OCI-LY7 (cell line): ENCODE measurements at regions of chr7 and their contacts with region 1.

Region 1: GRCh38 chr7:32347244-32347828 is 142.8 kb downstream of the LSM5 start:
- DNase-seq: peak; percentile 19
- H3K4me3 ChIP-seq: no peak overlapping the region
- H3K27ac ChIP-seq: no peak overlapping the region
- H3K4me1 ChIP-seq: no peaks in the 10 kb centered on the region
- CTCF ChIP-seq: peak; percentile 90

Region 2: GRCh38 chr7:31875424-31875823 is 471.9 kb before region 1 on chr7:
- CTCF ChIA-PET with region 1: no interaction called
- POLR2A ChIA-PET with region 1: no interaction called
- intact Hi-C with region 1: no loop called
- DNase-seq: no peak
- H3K4me3 ChIP-seq: no peak overlapping the region
- H3K27ac ChIP-seq: no peak overlapping the region
- H3K4me1 ChIP-seq: no peaks in the 10 kb centered on the region
- CTCF ChIP-seq: no peak

Region 3: DNA sequence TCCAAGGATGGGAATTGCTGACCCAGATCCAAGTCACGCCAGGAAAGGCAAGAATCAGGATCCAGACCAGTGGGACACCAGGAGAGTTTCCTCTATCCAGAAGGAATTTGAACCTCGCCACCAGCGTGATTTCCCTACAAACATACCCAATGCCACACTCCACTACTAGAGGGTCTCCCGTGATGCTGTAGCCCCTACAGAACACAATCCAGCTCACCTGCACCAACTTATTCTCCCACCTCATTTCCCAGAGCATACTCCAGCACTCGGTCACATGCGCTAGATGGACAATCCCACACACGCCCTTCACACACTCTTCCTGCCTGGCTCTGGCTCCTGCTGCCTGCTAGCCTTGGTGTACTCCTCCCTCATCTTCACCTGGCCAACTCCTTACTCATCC is 135.0 kb before region 1 on chr7:
- CTCF ChIA-PET with region 1: no interaction called
- POLR2A ChIA-PET with region 1: no interaction called
- intact Hi-C with region 1: loop called (anchors 5 kb)
- DNase-seq: no peak
- H3K4me3 ChIP-seq: no peak overlapping the region
- H3K27ac ChIP-seq: no peak overlapping the region
- H3K4me1 ChIP-seq: no peaks in the 10 kb centered on the region
- CTCF ChIP-seq: no peak